ENCODE measurements at regions of chr3 and their contacts with region 1.

Region 1: GRCh38 chr3:9422712-9423424 is 25.5 kb downstream of the SETD5 start:
- DNase-seq: peak; percentile 47
- H3K4me3 Mint-ChIP-seq: peak overlapping the region; percentile 19
- H3K27ac Mint-ChIP-seq: peak overlapping the region; percentile 92
- H3K4me1 Mint-ChIP-seq: peaks cover 45% of the 10 kb centered on the region
- H3K27me3 Mint-ChIP-seq: no peaks in the 10 kb centered on the region

Region 2: DNA sequence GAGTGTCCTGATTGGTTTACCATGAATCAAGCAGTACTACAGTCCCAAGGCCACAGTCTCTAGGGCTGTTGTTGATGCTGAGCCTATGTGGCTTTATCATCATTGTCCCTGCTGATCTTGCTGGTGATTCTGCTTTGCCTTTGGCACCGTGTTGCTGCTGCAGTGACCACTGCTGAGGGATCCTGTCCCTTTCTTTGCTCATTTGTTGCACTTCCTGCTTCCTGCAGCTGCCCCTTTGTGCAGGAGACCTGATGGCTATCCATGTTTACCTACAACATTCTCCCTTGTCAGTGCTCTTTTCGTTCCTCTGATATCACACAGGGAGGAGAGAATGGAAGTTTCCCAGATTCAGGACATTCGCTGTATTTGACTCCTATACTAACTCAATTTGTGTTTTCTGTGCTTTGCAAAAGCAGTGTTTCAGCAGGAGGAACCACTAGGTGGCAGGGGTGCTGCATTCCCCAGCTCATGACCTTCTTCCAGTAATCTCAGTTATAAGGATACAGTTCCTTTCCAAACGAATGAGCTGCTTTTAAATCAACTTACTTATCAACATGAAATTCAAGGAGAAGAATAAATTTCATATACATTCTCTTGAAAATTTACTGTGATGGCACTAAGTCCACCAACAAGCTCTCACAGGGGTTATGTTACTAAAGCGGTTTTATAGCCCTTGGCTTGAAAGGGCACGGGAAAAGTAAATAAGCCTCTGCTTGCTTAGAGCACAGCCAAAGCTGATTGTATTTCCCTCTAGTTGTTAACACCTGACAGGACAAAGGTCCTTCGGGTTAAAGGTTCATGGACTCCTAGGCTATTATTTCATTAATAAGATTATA is 69.7 kb before region 1 on chr3:
- CTCF ChIA-PET with region 1: interaction called, 5 read pairs
- intact Hi-C with region 1: loop called (anchors 1 kb)
- DNase-seq: peak; percentile 78
- H3K4me3 Mint-ChIP-seq: no peak overlapping the region
- H3K27ac Mint-ChIP-seq: peak overlapping the region; percentile 57
- H3K4me1 Mint-ChIP-seq: peaks cover 22% of the 10 kb centered on the region
- H3K27me3 Mint-ChIP-seq: no peaks in the 10 kb centered on the region

Region 3: DNA sequence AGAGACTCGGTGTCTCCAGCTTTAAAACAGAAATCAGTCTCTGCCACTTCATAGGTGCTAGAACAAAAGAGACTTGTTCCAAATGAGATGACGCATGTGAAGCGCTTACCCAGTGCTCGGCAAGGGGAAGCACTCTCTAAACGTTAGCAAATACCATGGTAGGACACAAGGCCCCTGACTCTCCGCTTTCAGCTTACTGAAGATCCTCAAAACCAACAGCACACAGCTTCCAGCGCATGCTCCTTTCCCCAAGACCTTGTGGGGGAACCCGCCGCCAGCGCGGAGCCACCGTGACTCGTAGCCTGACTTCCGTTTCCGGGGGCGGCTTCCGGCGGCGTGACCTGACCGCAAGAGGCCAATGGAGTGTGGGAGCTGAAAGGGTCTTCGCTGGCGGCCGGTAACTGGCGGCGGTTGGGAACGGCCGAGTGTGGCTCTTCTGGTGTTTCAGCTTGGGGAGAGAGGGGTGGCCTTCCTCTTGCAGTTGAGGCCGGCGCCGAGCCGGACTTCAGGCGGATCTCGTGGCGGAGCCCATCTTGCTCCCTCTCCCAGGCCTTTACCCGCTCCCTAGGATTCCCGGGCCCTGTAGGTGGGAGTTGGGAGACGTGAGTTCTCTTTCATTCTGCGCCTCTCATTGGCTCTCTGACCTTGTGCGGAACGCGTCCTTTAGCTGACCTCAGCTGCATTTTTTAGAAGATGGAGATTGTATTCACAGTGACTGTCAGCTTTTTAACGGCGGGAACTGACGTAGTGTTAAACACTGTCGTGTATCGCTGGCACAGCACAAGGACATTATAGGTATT is 59.9 kb before region 1 on chr3 and contains the start of gene THUMPD3:
- CTCF ChIA-PET with region 1: interaction called, 3 read pairs
- intact Hi-C with region 1: loop called (anchors 2 kb)
- DNase-seq: peak; percentile 95
- H3K4me3 Mint-ChIP-seq: peak within 1 kb of the TSS; percentile 98
- H3K27ac Mint-ChIP-seq: peak within 1 kb of the TSS; percentile 99
- H3K4me1 Mint-ChIP-seq: peaks cover 26% of the 10 kb centered on the region
- H3K27me3 Mint-ChIP-seq: no peaks in the 10 kb centered on the region
- total RNA-seq, gene THUMPD3: 46.0 to 48.9 TPM

Region 4: DNA sequence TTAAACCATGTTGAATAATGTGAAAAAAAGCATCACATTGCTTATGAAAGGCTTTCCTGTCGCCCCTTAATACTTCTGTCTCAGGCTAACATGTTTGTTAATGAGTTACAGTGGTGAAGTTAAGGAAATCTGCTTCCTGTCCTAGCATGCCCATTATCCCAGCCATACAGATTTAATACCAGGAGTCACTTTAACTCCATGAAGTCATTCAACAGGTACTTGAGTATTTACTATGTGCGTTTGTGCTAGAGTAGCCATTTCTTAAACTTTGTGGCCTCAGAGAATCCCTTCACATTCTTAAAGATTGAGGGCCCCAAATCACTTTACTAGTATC is 35.6 kb before region 1 on chr3:
- CTCF ChIA-PET with region 1: interaction called, 3 read pairs
- intact Hi-C with region 1: loop called (anchors 5 kb)
- DNase-seq: no peak
- H3K4me3 Mint-ChIP-seq: no peak overlapping the region
- H3K27ac Mint-ChIP-seq: peak overlapping the region; percentile 62
- H3K4me1 Mint-ChIP-seq: peaks cover 28% of the 10 kb centered on the region
- H3K27me3 Mint-ChIP-seq: no peaks in the 10 kb centered on the region

Region 5: GRCh38 chr3:9404680-9405079 is 18.2 kb before region 1 on chr3:
- CTCF ChIA-PET with region 1: interaction called, 11 read pairs
- intact Hi-C with region 1: no loop called
- DNase-seq: no peak
- H3K4me3 Mint-ChIP-seq: no peak overlapping the region
- H3K27ac Mint-ChIP-seq: no peak overlapping the region
- H3K4me1 Mint-ChIP-seq: peaks cover 79% of the 10 kb centered on the region
- H3K27me3 Mint-ChIP-seq: no peaks in the 10 kb centered on the region

Region 6: DNA sequence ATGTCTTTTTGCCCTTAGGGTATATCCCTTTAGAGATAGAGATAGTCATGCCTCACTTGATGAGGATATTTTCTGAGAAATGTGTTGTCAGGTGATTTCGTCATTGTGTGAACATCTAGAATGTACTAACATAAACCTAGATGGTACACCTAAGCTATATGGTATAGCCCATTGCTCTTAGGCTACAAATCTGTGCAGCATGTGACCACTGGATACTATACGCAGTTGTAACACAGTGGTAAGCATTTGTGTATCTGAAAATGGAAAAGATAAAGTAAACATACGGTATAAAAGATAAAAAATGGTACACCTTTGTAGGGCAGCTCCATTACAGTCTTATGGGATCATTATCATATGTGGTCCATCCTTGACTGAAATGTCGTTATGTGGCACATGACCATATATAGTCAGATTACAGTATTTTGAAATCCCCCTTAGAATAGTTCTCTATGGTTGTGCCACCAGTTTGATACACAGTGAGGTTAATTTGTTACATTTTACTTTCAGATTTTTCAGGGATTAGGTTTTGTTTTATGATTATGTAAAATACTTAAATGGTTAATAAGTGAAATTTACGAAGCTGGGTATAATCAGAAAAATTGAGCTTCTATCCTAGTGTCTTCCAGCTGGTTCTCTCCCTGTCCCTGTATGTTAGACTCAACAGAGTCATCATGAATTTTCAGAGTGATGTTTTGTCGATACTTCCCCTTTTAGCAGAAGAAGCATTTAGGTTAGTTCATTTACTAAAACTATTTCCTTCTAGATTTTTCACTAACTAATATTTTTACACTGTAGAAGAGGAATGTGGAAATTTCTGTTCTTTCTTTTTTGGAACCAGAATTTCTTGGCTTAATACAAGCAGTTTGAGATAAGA is 12.7 kb before region 1 on chr3:
- CTCF ChIA-PET with region 1: interaction called, 11 read pairs
- intact Hi-C with region 1: loop called (anchors 1 kb)
- DNase-seq: no peak
- H3K4me3 Mint-ChIP-seq: no peak overlapping the region
- H3K27ac Mint-ChIP-seq: peak overlapping the region; percentile 28
- H3K4me1 Mint-ChIP-seq: peaks cover 57% of the 10 kb centered on the region
- H3K27me3 Mint-ChIP-seq: no peaks in the 10 kb centered on the region